ENCODE measurements at regions of chr21 and their contacts with region 1.

Region 1: GRCh38 chr21:32940079-32941014 is 85.4 kb upstream of the OLIG2 start:
- DNase-seq: peak; percentile 40
- ATAC-seq: peak; percentile 93
- H3K4me3 ChIP-seq: no peak overlapping the region
- H3K27ac ChIP-seq: no peak overlapping the region
- H3K4me1 ChIP-seq: 0 out of 4 replicates have a peak, but pooled peaks cover 0 to 6% of the 10 kb centered on the region in 2 experiments
- H3K27me3 ChIP-seq: peaks cover 12% of the 10 kb centered on the region; the same call in 1 of the 2 replicates
- CTCF ChIP-seq: peak; percentile 66 to 92 (median 90); a peak in 5 of 6 replicates
- POLR2A ChIP-seq: no peak
- RAD21 ChIP-seq: peak; percentile 63

Region 2: DNA sequence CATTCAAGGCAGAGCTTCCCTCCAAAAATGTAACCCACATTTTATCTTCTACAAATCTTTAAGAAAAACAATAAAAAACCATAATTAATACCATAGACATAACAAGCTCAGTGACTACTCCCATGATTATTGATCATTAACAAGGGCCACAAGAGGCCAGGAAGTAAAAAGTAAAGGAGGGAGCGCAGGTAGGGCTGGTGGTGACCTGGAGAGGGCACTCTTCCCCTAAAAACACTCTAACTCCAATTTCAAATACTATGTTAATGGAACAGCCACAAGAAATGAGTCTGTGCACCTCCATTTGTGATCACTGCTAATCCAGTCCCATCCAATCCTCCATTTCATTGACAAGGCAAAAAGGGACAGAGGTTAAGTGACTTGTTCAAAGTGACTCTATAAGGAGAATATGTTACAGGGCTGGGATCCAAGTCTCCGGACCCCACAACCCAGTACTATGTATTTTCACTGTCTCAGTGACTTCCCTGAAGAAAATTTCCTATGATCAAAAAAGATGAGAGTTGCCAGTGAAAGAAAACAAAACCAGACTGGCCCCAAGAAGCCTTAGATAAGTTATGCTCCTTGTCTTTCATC is 286.9 kb before region 1 on chr21:
- CTCF ChIA-PET with region 1: no interaction called
- POLR2A ChIA-PET with region 1: no interaction called
- RAD21 ChIA-PET with region 1: no interaction called
- intact Hi-C with region 1: loop called (anchors 5 kb)
- DNase-seq: peak; percentile 15
- ATAC-seq: peak; percentile 86
- H3K4me3 ChIP-seq: no peak overlapping the region
- H3K27ac ChIP-seq: no peak overlapping the region
- H3K4me1 ChIP-seq: no peaks in the 10 kb centered on the region
- H3K27me3 ChIP-seq: no peaks in the 10 kb centered on the region
- CTCF ChIP-seq: peak; percentile 36 to 84 (median 78); a peak in 4 of 6 replicates
- POLR2A ChIP-seq: no peak
- RAD21 ChIP-seq: peak; percentile 69

Region 3: DNA sequence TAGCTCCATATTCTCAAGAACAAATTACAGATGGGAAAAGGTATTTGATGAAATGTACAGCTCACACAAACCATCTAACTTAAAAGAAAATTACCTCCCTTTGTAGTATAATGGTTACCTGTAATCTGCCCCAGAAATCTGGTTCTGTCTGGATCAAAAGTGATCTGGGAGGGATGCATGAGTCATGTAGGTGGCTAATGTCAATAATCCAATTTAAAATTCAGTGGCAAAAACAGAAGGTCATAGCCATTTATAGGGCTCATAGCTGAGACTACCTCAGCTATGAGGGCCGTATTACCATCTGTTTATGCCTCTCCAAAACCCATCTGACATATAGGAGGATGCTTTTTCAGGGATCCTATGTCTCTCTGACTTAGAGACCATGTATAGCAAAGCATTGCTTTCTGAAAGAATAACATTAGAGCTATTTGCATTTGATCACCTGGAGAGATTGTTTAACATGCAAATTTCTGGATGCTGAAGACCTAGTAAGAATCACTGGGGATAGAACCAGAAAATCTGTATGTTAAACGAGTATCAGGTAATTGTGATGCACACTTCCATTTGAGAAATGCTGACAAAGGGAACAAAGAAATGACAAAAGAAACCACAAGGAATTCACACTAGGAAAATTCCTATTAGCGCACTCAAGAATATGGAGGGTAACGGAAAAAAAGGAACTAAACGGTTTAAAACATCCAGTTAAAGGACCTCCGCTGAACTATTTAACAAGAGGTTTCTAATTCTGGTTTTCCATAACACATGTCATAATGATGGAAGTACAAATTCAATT is 186.3 kb before region 1 on chr21:
- CTCF ChIA-PET with region 1: no interaction called
- POLR2A ChIA-PET with region 1: no interaction called
- RAD21 ChIA-PET with region 1: no interaction called
- intact Hi-C with region 1: no loop called
- DNase-seq: no peak
- ATAC-seq: no peak
- H3K4me3 ChIP-seq: no peak overlapping the region
- H3K27ac ChIP-seq: no peak overlapping the region
- H3K4me1 ChIP-seq: peaks cover 0 to 4% of the 10 kb centered on the region in 2 experiments; a peak in 2 of 4 replicates
- H3K27me3 ChIP-seq: no peaks in the 10 kb centered on the region
- CTCF ChIP-seq: no peak
- POLR2A ChIP-seq: no peak
- RAD21 ChIP-seq: no peak

Region 4: DNA sequence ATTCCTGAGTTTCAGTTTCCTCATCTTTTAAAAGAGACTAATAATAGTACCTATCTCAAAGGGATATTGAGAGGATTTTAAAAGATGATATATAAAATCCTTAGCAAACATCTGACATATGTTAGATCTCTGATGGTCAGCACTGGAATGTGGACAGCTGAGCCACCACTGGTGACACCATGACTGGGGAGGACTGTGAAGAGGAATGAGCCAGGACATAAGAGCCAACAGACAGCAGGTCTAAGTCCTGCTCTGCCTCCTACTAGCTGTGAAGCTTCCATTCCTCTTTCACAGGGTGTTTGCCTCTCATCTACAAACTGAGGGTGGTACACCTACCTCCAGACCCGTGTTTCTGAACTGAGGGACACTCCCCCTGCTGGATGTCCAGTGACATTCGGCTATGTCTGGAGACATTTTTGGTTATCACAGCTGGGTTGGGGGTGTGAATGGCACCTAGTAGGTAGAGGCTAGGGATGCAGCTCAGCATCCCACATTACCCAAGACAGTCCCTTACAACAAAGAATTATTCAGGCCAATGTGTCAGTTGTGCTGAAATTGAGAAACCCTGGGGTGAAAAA is 23.7 kb before region 1 on chr21:
- CTCF ChIA-PET with region 1: interaction called, 10 read pairs
- POLR2A ChIA-PET with region 1: no interaction called
- RAD21 ChIA-PET with region 1: no interaction called
- intact Hi-C with region 1: no loop called
- DNase-seq: peak; percentile 15
- ATAC-seq: peak; percentile 80
- H3K4me3 ChIP-seq: no peak overlapping the region
- H3K27ac ChIP-seq: no peak overlapping the region
- H3K4me1 ChIP-seq: no peaks in the 10 kb centered on the region
- H3K27me3 ChIP-seq: peaks cover 24% of the 10 kb centered on the region; the same call in 1 of the 2 replicates
- CTCF ChIP-seq: peak; percentile 15 to 78 (median 69); a peak in 5 of 6 replicates
- POLR2A ChIP-seq: no peak
- RAD21 ChIP-seq: peak; percentile 38; the same call in 1 of the 2 replicates

Region 5: DNA sequence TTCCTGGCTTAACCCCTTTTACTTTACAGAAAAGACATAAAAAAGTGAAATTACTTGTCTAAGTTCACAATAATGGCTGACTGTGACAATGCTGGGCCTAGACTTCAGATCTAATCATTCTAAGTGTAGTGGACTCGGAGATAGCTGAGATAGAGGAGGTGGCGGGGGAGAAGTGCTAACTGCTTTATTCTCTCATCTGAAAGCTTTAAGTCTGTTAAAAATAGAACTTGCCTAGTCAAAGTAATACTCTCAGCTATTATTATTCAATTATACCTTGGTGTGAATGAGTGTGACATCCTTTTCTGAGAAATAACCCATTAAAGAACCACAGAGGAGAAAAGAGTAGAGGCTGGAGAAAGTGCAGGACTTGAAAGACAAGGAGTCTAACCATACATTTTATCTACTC is 10.7 kb before region 1 on chr21:
- CTCF ChIA-PET with region 1: interaction called, 18 read pairs
- POLR2A ChIA-PET with region 1: no interaction called
- RAD21 ChIA-PET with region 1: no interaction called
- intact Hi-C with region 1: no loop called
- DNase-seq: no peak
- ATAC-seq: no peak
- H3K4me3 ChIP-seq: no peak overlapping the region
- H3K27ac ChIP-seq: no peak overlapping the region
- H3K4me1 ChIP-seq: no peaks in the 10 kb centered on the region
- H3K27me3 ChIP-seq: no peaks in the 10 kb centered on the region
- CTCF ChIP-seq: no peak
- POLR2A ChIP-seq: no peak
- RAD21 ChIP-seq: no peak

Region 6: DNA sequence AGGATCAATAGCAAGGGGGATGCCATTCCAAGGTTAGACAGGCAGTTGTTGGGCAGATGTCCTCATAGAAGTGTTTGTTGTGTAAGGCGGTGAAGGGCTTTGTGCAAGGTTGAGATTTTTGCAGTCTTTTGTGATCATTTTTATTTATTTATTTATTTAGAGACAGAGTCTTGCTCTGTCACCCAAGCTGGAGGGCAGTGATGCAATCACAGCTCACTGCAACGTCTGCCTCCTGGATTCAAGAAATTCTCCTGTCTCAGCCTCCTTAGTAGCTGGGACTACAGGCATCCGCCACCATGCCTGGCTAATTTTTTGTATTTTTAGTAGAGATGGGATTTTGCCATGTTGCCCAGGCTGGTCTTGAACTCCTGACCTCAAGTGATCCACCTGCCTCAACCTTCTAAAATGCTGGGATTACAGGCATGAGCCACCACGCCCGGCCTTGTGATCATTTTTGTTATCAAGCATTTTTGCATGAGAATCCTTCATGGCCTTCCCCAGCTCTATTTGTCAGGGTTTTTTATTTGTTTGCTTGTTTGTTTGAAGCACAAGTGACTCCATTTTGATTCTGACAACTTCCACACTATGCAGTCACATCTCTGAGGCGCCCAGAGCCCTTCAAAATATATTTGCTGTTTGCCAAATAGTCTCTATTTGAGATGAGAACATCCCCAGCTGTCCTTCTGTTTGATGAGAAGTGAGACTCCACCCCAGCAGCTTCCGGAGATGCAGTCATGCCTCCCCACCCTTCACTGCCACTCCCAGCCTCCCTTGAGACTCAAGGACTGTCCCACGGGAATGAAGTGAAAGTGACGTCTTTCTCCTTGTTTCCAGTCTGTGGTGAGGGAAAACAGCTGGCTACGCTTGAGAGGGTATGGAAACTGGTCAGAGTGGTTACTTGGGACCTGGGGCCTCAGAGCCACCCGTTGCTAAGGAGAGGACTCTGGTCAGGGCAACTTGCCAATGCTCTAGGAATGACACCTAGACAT is 501.4 kb after region 1 on chr21:
- CTCF ChIA-PET with region 1: interaction called, 6 read pairs
- POLR2A ChIA-PET with region 1: no interaction called
- RAD21 ChIA-PET with region 1: no interaction called
- intact Hi-C with region 1: loop called (anchors 10 kb)
- DNase-seq: no peak
- ATAC-seq: no peak
- H3K4me3 ChIP-seq: no peak overlapping the region
- H3K27ac ChIP-seq: no peak overlapping the region
- H3K4me1 ChIP-seq: peaks cover 3 to 5% of the 10 kb centered on the region in 2 experiments; a peak in 2 of 4 replicates
- H3K27me3 ChIP-seq: no peaks in the 10 kb centered on the region
- CTCF ChIP-seq: no peak
- POLR2A ChIP-seq: no peak
- RAD21 ChIP-seq: no peak